HEK293 (cell line): ENCODE measurements at regions of chr14 and their contacts with region 1.

Region 1: GRCh38 chr14:94001501-94002396 is 4.6 kb downstream of the CCDC197 start:
- H3K4me3 ChIP-seq: no peak overlapping the region
- H3K27ac ChIP-seq: no peak overlapping the region
- H3K4me1 ChIP-seq: no peaks in the 10 kb centered on the region; the same call in 1 of the 2 replicates
- CTCF ChIP-seq: peak; percentile 75

Region 2: GRCh38 chr14:93970549-93970946 is 31.2 kb before region 1 on chr14:
- CTCF ChIA-PET with region 1: interaction called, 13 read pairs
- POLR2A ChIA-PET with region 1: no interaction called
- H3K4me3 ChIP-seq: no peak overlapping the region
- H3K27ac ChIP-seq: no peak overlapping the region
- H3K4me1 ChIP-seq: no peaks in the 10 kb centered on the region
- CTCF ChIP-seq: peak; percentile 55; the same call in 1 of the 2 replicates

Region 3: DNA sequence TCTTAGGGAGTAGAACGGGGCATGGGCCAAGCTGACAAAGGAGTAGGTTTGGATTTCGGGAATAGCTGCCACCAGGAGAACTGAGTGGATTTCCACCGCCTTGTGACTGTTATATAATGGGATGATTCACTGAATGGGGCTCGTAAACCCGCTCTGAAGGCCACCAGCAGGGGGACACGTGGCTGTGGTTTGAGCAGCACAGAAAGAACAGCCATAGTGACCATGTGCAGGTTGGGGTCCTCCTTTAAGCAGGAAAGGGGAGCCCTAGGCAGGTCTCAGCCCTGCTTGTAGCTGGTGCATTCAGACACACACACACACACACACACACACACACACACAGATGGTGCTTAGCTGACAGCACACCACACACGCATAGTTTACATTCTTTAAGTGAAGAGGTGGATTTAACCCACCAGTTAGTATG is 16.8 kb before region 1 on chr14:
- CTCF ChIA-PET with region 1: interaction called, 27 read pairs
- POLR2A ChIA-PET with region 1: no interaction called
- H3K4me3 ChIP-seq: no peak overlapping the region
- H3K27ac ChIP-seq: no peak overlapping the region; the same call in 1 of the 2 replicates
- H3K4me1 ChIP-seq: no peaks in the 10 kb centered on the region
- CTCF ChIP-seq: peak; percentile 82; the same call in 1 of the 2 replicates

Region 4: GRCh38 chr14:94173885-94174603 is 172.3 kb after region 1 on chr14 and contains the start of gene PPP4R4:
- CTCF ChIA-PET with region 1: no interaction called
- POLR2A ChIA-PET with region 1: no interaction called
- H3K4me3 ChIP-seq: peak within 1 kb of the TSS; percentile 62
- H3K27ac ChIP-seq: peak within 1 kb of the TSS; percentile 46; the same call in 1 of the 2 replicates
- H3K4me1 ChIP-seq: no peaks in the 10 kb centered on the region
- CTCF ChIP-seq: no peak